ENCODE measurements at regions of chr9 and their contacts with region 1.

Region 1: GRCh38 chr9:117145811-117146490 is 268.9 kb downstream of the ASTN2 start:
- DNase-seq: no peak
- ATAC-seq: no peak
- H3K4me3 ChIP-seq: no peak overlapping the region
- H3K27ac ChIP-seq: no peak overlapping the region
- H3K4me1 ChIP-seq: no peaks in the 10 kb centered on the region
- H3K27me3 ChIP-seq: no peaks in the 10 kb centered on the region
- CTCF ChIP-seq: no peak
- POLR2A ChIP-seq: no peak

Region 2: GRCh38 chr9:116724123-116724522 is 421.8 kb before region 1 on chr9:
- in situ Hi-C with region 1: no loop called
- intact Hi-C with region 1: no loop called
- DNase-seq: no peak
- ATAC-seq: no peak
- H3K4me3 ChIP-seq: no peak overlapping the region
- H3K27ac ChIP-seq: no peak overlapping the region
- H3K4me1 ChIP-seq: no peaks in the 10 kb centered on the region
- H3K27me3 ChIP-seq: no peaks in the 10 kb centered on the region
- CTCF ChIP-seq: no peak
- POLR2A ChIP-seq: no peak

Region 3: DNA sequence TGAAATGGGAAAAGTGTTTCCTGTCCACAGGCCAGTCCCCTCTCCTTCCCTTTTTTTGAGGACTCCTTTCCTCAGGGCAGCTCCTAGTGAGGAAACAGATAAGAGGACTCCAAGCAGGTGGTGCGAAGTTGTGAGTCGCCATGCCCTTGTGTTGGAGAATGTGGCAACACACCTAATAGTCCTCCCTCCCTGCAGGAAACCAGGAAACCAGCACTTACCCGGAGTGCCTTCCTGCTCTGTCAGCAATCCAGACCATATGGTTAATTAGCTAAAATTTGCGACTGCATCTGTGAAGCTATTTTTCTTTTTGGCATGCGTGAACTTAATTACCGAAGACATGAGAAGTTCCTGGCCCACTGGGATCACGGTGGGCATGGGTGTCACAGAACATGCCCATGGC is 388.9 kb before region 1 on chr9:
- in situ Hi-C with region 1: no loop called
- intact Hi-C with region 1: no loop called
- DNase-seq: no peak
- ATAC-seq: no peak
- H3K4me3 ChIP-seq: no peak overlapping the region
- H3K27ac ChIP-seq: no peak overlapping the region
- H3K4me1 ChIP-seq: no peaks in the 10 kb centered on the region
- H3K27me3 ChIP-seq: no peaks in the 10 kb centered on the region
- CTCF ChIP-seq: no peak
- POLR2A ChIP-seq: no peak

Region 4: DNA sequence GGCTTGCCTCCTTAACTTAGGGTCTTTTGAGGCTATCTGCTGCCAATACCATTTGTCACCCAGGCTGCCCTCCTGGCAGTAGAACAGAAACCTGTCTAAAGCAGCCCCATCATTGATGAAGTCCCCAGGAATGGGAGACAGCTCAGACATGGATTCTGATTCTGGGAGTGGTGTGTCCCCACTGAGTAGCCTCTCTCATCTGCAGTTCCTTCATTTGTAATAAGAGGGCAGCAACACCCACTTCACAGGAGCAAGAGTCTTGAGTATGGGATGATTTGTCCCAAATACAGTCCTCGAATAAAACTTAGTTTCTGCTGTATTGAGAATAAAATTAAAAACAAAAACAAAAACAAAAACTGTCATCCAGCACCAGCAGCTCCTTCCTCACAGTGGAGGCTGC is 101.3 kb after region 1 on chr9:
- in situ Hi-C with region 1: loop called in 1 of 4 experiments (anchors 25 kb)
- intact Hi-C with region 1: no loop called
- DNase-seq: no peak
- ATAC-seq: no peak
- H3K4me3 ChIP-seq: no peak overlapping the region
- H3K27ac ChIP-seq: no peak overlapping the region
- H3K4me1 ChIP-seq: no peaks in the 10 kb centered on the region
- H3K27me3 ChIP-seq: peaks cover 0 to 3% (median 0%) of the 10 kb centered on the region in 3 donors
- CTCF ChIP-seq: no peak
- POLR2A ChIP-seq: no peak